A549 (cell line): ENCODE measurements at regions of chr12 and their contacts with region 1.

Region 1: GRCh38 chr12:50084775-50085614 is at the start of gene SMARCD1:
- DNase-seq: peak; percentile 92 to 95
- ATAC-seq: peak; percentile 87 to 93
- H3K4me3 ChIP-seq: peak within 1 kb of the TSS; percentile 64
- H3K27ac ChIP-seq: peak within 1 kb of the TSS; percentile 96 to 99
- H3K4me1 ChIP-seq: peaks cover 36% of the 10 kb centered on the region
- CTCF ChIP-seq: peak; percentile 72
- EP300 ChIP-seq: no peak
- POLR2A ChIP-seq: peak; percentile 37; the same call in 1 of the 2 replicates
- RAD21 ChIP-seq: no peak
- polyA plus RNA-seq, gene SMARCD1: 80.7 and 113 TPM in 2 replicates

Region 2: DNA sequence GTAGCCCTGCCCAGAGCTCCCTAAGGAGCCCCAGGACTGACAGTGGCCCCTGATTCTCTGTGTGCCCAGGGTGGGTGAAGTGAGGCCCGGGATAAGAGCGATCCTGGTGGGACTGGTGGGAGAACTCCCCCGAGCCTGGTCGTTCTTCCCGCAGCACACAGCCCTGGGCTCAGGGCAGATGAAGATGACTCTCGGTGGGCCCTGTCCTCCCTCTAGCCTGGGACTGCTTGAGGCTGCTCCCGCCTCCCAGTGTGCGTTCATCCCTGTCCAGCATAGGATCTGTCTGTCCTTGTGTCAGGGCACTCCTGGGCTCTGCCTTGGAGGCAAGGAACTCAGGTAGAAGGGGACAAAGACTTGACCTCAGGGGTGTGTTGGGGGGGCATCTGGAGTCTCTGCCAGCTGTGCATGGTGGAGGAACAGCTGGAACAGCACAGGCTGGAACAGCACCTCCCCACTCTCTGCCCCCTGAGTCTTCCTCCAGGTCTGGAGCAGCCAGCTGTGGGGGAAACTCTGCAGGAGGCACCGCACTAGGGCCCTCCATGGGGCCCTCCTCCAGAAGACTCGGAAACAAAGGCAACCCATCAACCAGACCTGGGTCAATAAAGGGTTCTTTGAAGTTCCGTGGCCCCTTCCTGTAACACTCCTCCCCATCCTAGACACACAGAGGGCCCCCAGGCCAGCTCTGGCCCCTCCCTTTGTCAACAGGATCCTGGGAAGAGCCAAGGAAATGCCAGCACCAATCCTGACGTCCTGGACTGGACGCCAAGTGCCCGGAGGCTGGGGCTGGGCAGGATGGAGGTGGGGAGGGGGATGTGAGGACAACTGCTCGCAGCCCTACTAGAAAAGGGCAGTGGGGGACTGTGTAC is 197.2 kb before region 1 on chr12:
- CTCF ChIA-PET with region 1: no interaction called
- POLR2A ChIA-PET with region 1: no interaction called
- DNase-seq: peak in 1 of 2 experiments; percentile 20
- ATAC-seq: peak in 1 of 2 experiments; percentile 25; a peak in 3 of 6 replicates
- H3K4me3 ChIP-seq: no peak overlapping the region
- H3K27ac ChIP-seq: peak overlapping the region; percentile 24 to 30; a peak in 2 of 6 replicates
- H3K4me1 ChIP-seq: peaks cover 13% of the 10 kb centered on the region
- CTCF ChIP-seq: no peak
- EP300 ChIP-seq: no peak
- POLR2A ChIP-seq: no peak
- RAD21 ChIP-seq: no peak

Region 3: DNA sequence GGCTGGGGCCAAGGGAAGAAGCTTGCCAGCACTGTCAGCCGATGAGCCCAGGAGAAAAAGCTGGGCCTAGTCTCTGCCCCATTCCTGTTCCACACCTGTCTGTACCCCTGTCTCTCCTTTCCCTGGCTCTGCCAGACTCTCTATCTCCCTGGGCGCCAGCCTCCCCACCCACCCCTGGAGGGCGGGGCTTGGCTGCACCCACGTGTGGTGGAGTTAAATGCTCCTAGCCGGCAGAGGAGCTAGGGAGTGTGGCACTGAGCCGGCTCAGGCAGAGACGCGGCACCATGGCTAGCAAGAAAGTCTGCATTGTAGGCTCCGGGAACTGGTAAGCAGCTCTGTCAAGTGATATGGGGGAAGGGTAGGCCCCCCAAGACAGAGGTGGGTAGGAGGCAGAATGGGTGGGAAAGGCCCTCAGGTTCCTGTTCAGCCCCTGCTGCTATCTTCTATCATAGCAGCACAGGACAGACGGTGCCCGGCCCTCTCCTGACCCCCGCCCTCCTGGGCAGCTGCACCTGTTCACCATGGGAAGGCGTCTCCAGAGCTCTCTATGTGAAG is 18.8 kb after region 1 on chr12 and contains the start of gene GPD1:
- CTCF ChIA-PET with region 1: interaction called, 309 read pairs
- POLR2A ChIA-PET with region 1: interaction called, 14 read pairs
- DNase-seq: no peak
- ATAC-seq: peak; percentile 5 to 60; a peak in 3 of 6 replicates
- H3K4me3 ChIP-seq: no peak within 1 kb of the TSS
- H3K27ac ChIP-seq: no peak within 1 kb of the TSS
- H3K4me1 ChIP-seq: no peaks in the 10 kb centered on the region
- CTCF ChIP-seq: no peak
- EP300 ChIP-seq: no peak
- POLR2A ChIP-seq: no peak
- RAD21 ChIP-seq: no peak
- polyA plus RNA-seq, gene GPD1: 0.44 and 0.52 TPM in 2 replicates

Region 4: DNA sequence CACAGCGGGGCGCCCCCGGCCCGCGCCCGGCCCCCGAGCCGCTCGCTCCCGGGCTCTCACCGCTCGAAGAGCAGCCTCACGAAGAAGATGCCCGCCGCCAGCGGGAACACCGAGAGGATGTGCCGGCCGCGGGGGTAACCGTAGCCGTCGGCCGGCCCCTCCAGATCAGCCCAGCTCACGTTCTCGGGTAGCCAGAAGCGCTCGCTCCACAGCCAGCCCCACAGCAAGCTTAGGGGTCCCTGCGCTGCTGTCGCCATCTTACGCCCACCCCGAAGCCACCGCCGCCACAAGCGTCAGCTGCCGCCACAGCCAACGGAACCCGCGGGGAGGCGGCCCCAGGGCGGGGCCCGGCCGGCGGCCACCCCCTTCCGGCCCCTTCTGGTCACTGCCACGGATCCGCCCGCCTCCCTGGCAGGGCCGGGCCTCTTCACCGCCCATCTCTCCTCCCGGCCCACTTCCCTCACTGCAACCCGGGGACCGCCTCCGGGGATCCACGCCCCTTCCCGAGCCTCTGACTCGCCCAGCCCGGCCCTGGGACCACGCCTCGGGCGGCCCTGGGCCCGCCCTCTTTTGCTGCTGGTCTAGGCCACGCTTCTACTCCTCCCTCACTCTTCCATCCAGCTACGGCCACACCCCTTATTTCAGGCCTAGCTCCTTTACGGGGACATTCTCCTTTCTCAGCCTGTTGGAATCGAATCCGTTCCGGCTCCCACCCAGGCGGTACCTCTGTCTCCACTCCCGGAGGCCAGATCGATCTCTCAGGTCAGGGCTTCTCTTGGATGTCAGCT is 82.2 kb after region 1 on chr12 and contains the start of gene CERS5:
- CTCF ChIA-PET with region 1: interaction called, 47 read pairs
- POLR2A ChIA-PET with region 1: interaction called, 23 read pairs
- DNase-seq: peak; percentile 94 to 99
- ATAC-seq: peak; percentile 98 to 99
- H3K4me3 ChIP-seq: peak within 1 kb of the TSS; percentile 83
- H3K27ac ChIP-seq: peak within 1 kb of the TSS; percentile 84 to 96
- H3K4me1 ChIP-seq: peaks cover 10% of the 10 kb centered on the region; the same call in 2 of the 3 replicates
- CTCF ChIP-seq: no peak
- EP300 ChIP-seq: no peak
- POLR2A ChIP-seq: peak; percentile 74
- RAD21 ChIP-seq: no peak
- polyA plus RNA-seq, gene CERS5: 56.3 and 56.6 TPM in 2 replicates

Region 5: DNA sequence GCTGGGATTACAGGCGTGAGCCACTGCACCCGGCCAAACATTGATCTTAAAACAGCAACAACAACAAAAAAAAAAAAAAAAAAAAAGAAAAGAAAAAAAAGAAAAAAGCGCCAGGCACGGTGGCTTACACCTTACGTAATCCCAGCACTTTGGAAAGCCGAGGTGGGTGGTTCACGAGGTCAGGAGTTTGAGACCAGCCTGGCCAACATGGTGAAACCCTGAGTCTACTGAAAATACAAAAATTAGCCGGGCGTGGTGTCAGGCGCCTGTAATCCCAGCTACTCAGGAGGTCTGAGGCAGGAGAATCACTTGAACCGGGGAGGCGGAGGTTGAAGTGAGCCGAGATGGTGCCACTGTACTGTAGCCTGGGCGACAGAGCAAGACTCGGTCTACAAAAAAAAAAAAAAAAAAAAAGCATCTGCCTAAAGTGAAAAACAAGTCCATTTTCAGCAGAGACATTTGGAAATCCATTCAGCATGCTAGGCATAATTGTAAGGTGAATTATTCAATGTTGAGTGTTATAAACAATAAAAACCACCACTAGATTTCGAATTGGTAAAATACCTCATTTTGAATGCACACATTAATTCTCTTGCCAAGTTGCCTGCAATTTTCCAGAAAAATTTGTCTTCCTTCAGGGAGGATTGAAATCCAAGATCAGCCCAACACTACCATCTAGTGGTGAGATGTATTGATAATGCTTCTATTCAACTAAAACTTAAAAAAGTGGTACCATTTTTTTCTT is 90.1 kb after region 1 on chr12:
- CTCF ChIA-PET with region 1: interaction called, 47 read pairs
- POLR2A ChIA-PET with region 1: interaction called, 7 read pairs
- DNase-seq: peak; percentile 52 to 81
- ATAC-seq: peak in 1 of 2 experiments; percentile 72; a peak in 3 of 6 replicates
- H3K4me3 ChIP-seq: no peak overlapping the region
- H3K27ac ChIP-seq: no peak overlapping the region
- H3K4me1 ChIP-seq: 0 out of 3 replicates have a peak, but pooled peaks cover 4% of the 10 kb centered on the region
- CTCF ChIP-seq: peak; percentile 91
- EP300 ChIP-seq: no peak
- POLR2A ChIP-seq: no peak
- RAD21 ChIP-seq: peak; percentile 91 to 92

Region 6: DNA sequence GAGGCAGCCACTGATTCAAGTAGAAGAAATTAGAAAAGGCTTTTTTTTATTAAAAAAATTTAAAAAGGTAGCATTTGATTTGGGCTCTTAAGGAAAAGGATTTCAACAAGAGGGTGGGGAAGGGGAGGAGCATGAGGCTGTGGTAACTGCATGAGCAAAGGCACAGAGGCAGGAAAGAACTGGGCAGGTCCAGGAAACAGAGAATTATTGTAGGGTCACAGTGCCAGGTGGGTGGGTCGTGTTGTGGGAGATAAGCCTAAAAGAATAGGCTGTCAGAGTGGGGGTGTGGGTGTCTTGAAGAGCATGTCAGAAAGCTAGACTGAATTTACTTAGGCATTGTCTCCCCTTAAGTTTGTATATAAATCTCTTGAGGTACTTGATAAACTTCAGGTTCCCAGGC is 190.6 kb after region 1 on chr12:
- CTCF ChIA-PET with region 1: no interaction called
- POLR2A ChIA-PET with region 1: no interaction called
- DNase-seq: no peak
- ATAC-seq: 0 out of 6 replicates have a peak, but pooled peaks of 1 of the 2 experiments have one; percentile 30
- H3K4me3 ChIP-seq: no peak overlapping the region
- H3K27ac ChIP-seq: no peak overlapping the region
- H3K4me1 ChIP-seq: peaks cover 35% of the 10 kb centered on the region
- CTCF ChIP-seq: no peak
- EP300 ChIP-seq: no peak
- POLR2A ChIP-seq: no peak
- RAD21 ChIP-seq: no peak